Left lung (tissue), 14 donors: ENCODE measurements at regions of chr15 and their contacts with region 1.

Region 1: GRCh38 chr15:38817427-38818156 is 253.0 kb upstream of the RASGRP1 start:
- DNase-seq: peak; percentile 62 to 95 (median 80)
- ATAC-seq: peak; percentile 100
- H3K4me3 ChIP-seq: no peak overlapping the region
- H3K27ac ChIP-seq: no peak overlapping the region
- H3K4me1 ChIP-seq: no peaks in the 10 kb centered on the region
- H3K27me3 ChIP-seq: no peaks in the 10 kb centered on the region
- CTCF ChIP-seq: peak; percentile 92 to 100

Region 2: DNA sequence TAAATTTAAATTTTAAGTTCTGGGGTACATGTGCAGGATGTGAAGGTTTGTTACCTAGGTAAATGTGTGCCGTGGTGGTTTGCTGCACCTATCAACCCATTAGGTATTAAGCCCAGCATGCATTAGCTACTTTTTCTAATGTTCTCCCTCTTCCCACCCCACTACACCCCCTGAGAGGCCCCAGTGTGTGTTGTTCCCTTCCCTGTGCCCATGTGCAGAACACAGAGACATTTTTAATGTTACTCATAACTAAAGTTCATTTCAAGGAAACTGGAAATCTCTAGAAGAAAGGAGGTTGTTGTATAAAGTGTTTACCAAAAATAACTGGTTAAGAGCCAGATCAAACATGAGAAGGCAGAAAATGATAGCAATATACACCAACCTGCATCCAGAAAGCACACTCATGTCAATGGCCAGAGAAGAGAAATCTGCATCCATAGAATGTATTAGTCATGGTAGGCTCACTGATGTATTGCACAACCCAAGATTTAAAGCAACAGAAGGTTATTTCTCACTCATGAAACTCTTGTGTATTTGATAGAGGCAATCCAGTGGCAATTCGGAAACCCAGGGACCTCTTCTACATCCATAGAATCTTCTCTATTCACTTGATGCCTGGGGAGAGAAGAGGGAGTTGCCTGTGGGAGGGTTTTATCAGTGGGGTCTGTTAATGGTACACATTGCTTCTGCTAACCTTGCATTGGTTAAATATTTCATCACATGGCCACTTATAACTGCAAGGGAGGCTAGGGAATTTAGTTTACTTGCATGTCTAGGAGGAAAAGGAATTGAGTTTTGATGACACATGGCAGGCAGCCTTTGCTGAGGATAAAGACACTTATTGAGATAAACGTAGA is 69.0 kb after region 1 on chr15:
- intact Hi-C with region 1: no loop called
- DNase-seq: peak in 1 of 4 donors; percentile 44
- ATAC-seq: peak; percentile 76
- H3K4me3 ChIP-seq: no peak overlapping the region
- H3K27ac ChIP-seq: peak overlapping the region; percentile 53 to 76
- H3K4me1 ChIP-seq: peaks cover 12 to 13% of the 10 kb centered on the region in 2 donors
- H3K27me3 ChIP-seq: no peaks in the 10 kb centered on the region
- CTCF ChIP-seq: no peak

Region 3: GRCh38 chr15:38991126-38991525 is 173.5 kb after region 1 on chr15:
- intact Hi-C with region 1: loop called in 1 of 2 experiments (anchors 10 kb)
- DNase-seq: peak in 1 of 4 donors; percentile 49
- ATAC-seq: peak; percentile 75
- H3K4me3 ChIP-seq: no peak overlapping the region
- H3K27ac ChIP-seq: peak overlapping the region in 1 of 2 donors; percentile 19
- H3K4me1 ChIP-seq: peaks cover 0 to 6% of the 10 kb centered on the region in 2 donors
- H3K27me3 ChIP-seq: no peaks in the 10 kb centered on the region
- CTCF ChIP-seq: peak; percentile 45 to 48

Region 4: GRCh38 chr15:39059917-39060316 is 242.3 kb after region 1 on chr15:
- intact Hi-C with region 1: no loop called
- DNase-seq: no peak
- ATAC-seq: no peak
- H3K4me3 ChIP-seq: no peak overlapping the region
- H3K27ac ChIP-seq: no peak overlapping the region
- H3K4me1 ChIP-seq: no peaks in the 10 kb centered on the region
- H3K27me3 ChIP-seq: no peaks in the 10 kb centered on the region
- CTCF ChIP-seq: no peak